ENCODE measurements at regions of chr9 and their contacts with region 1.

Region 1: DNA sequence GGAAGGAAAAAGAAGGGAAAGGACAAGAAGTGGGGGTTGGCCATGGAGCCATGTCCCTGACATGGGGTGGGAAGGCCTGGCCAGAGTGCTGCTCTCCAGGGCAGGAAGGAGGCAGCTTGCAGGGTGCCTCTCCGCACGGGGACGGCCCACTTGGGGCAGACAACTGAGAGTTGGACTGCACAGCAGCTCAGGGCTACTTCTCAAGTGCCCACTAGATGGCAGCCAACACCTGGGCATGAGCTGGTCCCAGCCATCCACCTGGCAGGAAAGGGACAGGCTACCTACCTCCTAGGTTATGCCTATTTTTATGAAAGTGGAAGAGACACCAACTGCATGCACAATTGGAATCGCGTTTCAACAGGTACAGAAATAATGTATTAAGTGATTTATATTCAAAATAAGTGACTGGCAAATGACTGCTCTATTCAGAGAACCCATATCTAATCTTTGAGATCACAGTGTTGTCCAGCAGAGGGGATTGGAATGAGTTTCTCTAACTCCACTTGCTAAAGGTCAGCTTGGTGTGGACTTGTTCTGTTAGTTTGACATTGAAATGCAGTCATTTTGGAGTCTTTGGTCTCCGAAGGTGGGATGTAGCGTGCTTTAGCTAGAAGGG is 113.4 kb downstream of the SYK start:
- DNase-seq: peak; percentile 64 to 70
- ATAC-seq: peak; percentile 63 to 72
- H3K4me3 ChIP-seq: no peak overlapping the region
- H3K27ac ChIP-seq: peak overlapping the region in 1 of 4 donors; percentile 19
- H3K4me1 ChIP-seq: peaks cover 7 to 8% of the 10 kb centered on the region in 2 donors
- H3K27me3 ChIP-seq: no peaks in the 10 kb centered on the region
- CTCF ChIP-seq: peak; percentile 86 to 96 (median 93)
- POLR2A ChIP-seq: no peak

Region 2: GRCh38 chr9:90964101-90965020 is 49.4 kb after region 1 on chr9:
- in situ Hi-C with region 1: no loop called
- intact Hi-C with region 1: no loop called
- DNase-seq: no peak
- ATAC-seq: no peak
- H3K4me3 ChIP-seq: no peak overlapping the region
- H3K27ac ChIP-seq: no peak overlapping the region
- H3K4me1 ChIP-seq: no peaks in the 10 kb centered on the region
- H3K27me3 ChIP-seq: peaks cover 0 to 6% (median 0%) of the 10 kb centered on the region in 3 donors
- CTCF ChIP-seq: no peak
- POLR2A ChIP-seq: no peak

Region 3: DNA sequence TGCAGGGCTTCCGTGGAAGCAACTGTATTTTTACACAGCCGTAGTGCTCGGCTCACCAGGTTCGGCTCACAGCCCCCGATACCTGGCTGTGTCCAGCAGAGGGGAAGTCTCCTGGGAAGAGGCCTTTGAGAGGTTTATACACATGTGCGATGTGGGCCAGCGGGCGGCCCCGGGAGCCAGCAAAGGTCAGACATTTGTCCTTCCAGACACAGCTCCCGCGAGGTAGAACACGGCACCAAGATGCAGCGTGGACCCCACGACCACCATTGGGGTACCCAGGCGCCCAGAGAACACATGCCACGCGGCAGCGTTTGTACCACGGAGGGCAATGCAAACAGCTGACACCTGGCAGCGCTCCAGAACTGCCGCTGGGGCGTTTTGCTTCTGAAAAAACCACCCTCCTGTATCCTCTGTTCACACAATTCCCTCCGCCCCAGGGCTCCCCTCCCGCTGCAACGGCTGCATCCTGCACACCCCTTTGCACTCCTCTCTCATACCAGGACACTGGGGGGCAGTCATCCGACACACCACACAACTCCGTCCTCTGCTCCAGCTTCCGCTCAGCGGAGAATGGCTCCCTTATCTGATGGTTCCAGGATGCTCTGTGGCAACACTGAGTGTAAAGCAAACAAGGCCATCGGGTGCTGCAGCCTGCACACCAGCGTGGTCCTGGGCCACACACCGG is 122.0 kb after region 1 on chr9:
- in situ Hi-C with region 1: no loop called
- intact Hi-C with region 1: loop called (anchors 1 kb)
- DNase-seq: peak; percentile 66 to 82
- ATAC-seq: peak; percentile 95 to 98
- H3K4me3 ChIP-seq: no peak overlapping the region
- H3K27ac ChIP-seq: peak overlapping the region in 1 of 4 donors; percentile 20
- H3K4me1 ChIP-seq: peaks cover 4 to 17% of the 10 kb centered on the region in 2 donors
- H3K27me3 ChIP-seq: no peaks in the 10 kb centered on the region
- CTCF ChIP-seq: peak; percentile 63 to 85 (median 76)
- POLR2A ChIP-seq: no peak

Region 4: GRCh38 chr9:91177661-91178280 is 262.8 kb after region 1 on chr9:
- in situ Hi-C with region 1: no loop called
- intact Hi-C with region 1: no loop called
- DNase-seq: no peak
- ATAC-seq: no peak
- H3K4me3 ChIP-seq: no peak overlapping the region
- H3K27ac ChIP-seq: no peak overlapping the region
- H3K4me1 ChIP-seq: no peaks in the 10 kb centered on the region
- H3K27me3 ChIP-seq: no peaks in the 10 kb centered on the region
- CTCF ChIP-seq: no peak
- POLR2A ChIP-seq: no peak

Region 5: GRCh38 chr9:91433180-91433579 is 518.2 kb after region 1 on chr9:
- in situ Hi-C with region 1: loop called (anchors 5 to 10 kb)
- intact Hi-C with region 1: no loop called
- DNase-seq: peak in 1 of 2 donors; percentile 31
- ATAC-seq: peak; percentile 98 to 100
- H3K4me3 ChIP-seq: no peak overlapping the region
- H3K27ac ChIP-seq: peak overlapping the region in 2 of 4 donors; percentile 28 to 48
- H3K4me1 ChIP-seq: no peaks in the 10 kb centered on the region
- H3K27me3 ChIP-seq: no peaks in the 10 kb centered on the region
- CTCF ChIP-seq: peak in 4 of 5 experiments; percentile 22 to 51 (median 30)
- POLR2A ChIP-seq: no peak

Region 6: GRCh38 chr9:91681461-91682305 is 766.7 kb after region 1 on chr9:
- in situ Hi-C with region 1: loop called (anchors 10 to 25 kb)
- intact Hi-C with region 1: loop called (anchors 2 kb)
- DNase-seq: peak; percentile 9 to 58
- ATAC-seq: peak in 1 of 2 donors; percentile 75
- H3K4me3 ChIP-seq: peak overlapping the region in 2 of 4 donors; percentile 17 to 34
- H3K27ac ChIP-seq: no peak overlapping the region
- H3K4me1 ChIP-seq: no peaks in the 10 kb centered on the region
- H3K27me3 ChIP-seq: no peaks in the 10 kb centered on the region
- CTCF ChIP-seq: peak; percentile 54 to 85 (median 74)
- POLR2A ChIP-seq: no peak

Region 7: DNA sequence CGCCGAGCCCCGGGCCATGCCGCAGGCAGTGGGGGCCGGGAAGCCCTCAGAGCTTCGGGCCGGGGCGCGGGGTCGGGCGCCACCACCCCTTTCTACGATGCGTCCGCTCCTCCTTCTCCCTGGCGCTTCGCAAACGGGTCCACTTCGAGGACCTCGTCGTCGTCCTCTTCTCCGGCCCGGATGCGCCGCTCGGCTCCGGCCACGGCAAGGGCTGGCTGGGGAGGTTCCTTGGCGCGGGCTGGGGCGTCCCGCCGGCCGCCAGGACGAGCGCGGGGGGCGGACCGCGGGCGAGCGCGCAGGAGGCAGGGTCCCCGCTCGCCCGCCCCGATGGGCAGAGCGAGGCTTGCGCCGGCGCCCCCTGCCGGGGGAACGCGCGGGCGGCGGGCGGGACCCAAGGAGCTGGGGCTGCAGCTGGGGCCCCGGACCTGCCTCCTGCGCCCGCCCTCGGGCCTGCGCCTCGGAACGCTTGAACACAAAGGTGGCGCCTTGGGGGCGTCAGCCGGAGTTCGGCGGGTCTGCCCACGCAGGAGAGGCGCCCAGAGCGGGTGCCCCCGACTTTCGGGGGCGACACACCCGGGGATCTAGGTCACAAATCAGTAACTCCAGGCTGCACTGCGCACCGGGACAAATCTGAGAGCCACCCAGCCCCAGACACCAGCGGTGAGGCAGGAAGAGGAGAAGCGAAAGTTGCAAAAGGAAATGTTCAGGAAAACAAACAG is 1035.1 kb after region 1 on chr9 and contains the start of gene ROR2:
- in situ Hi-C with region 1: no loop called
- intact Hi-C with region 1: loop called (anchors 5 kb)
- DNase-seq: no peak
- ATAC-seq: peak; percentile 49 to 56
- H3K4me3 ChIP-seq: peak within 1 kb of the TSS; percentile 38 to 46 (median 40)
- H3K27ac ChIP-seq: no peak within 1 kb of the TSS
- H3K4me1 ChIP-seq: peaks cover 0 to 7% of the 10 kb centered on the region in 2 donors
- H3K27me3 ChIP-seq: peaks cover 38 to 48% (median 48%) of the 10 kb centered on the region in 3 donors
- CTCF ChIP-seq: peak in 2 of 5 experiments; percentile 44 to 51
- POLR2A ChIP-seq: no peak
- total RNA-seq, gene ROR2: 0.15 to 1.2 (median 0.61) TPM